ENCODE measurements at regions of chr11 and their contacts with region 1.

Region 1: GRCh38 chr11:66081505-66081904 is 11.4 kb downstream of the PACS1 start:
- DNase-seq: peak; percentile 92
- H3K4me3 Mint-ChIP-seq: peak overlapping the region; percentile 83
- H3K27ac Mint-ChIP-seq: peak overlapping the region; percentile 89
- H3K4me1 Mint-ChIP-seq: peaks cover 62% of the 10 kb centered on the region
- H3K27me3 Mint-ChIP-seq: no peaks in the 10 kb centered on the region

Region 2: DNA sequence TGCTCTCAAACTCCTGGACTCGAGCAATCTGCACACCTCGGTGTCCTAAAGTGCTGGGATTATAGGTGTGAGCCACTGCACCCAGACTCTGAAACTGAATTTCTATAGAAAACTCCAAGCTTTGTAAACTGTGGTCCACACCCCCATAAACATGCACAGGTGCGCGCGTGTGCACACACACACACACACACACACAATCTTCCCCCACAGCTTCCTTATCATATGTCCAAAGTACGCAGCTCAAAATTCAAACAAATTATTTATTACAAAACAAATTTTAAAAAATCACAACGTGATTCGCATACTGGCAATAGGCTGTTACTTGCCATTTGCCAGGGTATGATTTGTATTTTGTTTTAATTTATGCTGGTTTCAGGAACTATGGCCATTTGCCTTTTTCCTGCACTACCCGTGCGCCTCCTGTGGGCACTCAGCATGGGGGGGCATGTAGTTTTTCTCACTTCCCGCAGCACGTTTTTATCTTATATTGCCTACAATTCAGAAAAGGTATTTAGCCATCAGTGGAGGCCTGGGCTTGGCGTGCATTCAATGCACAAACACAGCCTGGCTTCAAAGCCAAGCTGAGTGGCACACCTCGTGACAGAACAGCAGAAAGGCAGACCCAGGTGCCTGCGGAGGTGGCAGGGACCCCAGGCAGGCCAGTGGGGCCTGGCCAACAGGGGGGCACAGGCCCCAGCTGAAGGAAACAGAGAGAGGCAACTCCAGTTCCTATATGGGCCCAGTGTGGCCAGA is 258.6 kb before region 1 on chr11:
- intact Hi-C with region 1: no loop called
- DNase-seq: no peak
- H3K4me3 Mint-ChIP-seq: no peak overlapping the region
- H3K27ac Mint-ChIP-seq: no peak overlapping the region
- H3K4me1 Mint-ChIP-seq: peaks cover 10% of the 10 kb centered on the region
- H3K27me3 Mint-ChIP-seq: no peaks in the 10 kb centered on the region

Region 3: GRCh38 chr11:66051766-66052663 is 29.5 kb before region 1 on chr11 and contains the start of gene SF3B2:
- intact Hi-C with region 1: no loop called
- DNase-seq: peak; percentile 99
- H3K4me3 Mint-ChIP-seq: peak within 1 kb of the TSS; percentile 88
- H3K27ac Mint-ChIP-seq: peak within 1 kb of the TSS; percentile 97
- H3K4me1 Mint-ChIP-seq: peaks cover 21% of the 10 kb centered on the region
- H3K27me3 Mint-ChIP-seq: peaks cover 6% of the 10 kb centered on the region
- total RNA-seq, gene SF3B2: 283 and 284 TPM in 2 replicates

Region 4: GRCh38 chr11:66112601-66113098 is 31.1 kb after region 1 on chr11:
- intact Hi-C with region 1: loop called (anchors 2 kb)
- DNase-seq: no peak
- H3K4me3 Mint-ChIP-seq: peak overlapping the region; percentile 32
- H3K27ac Mint-ChIP-seq: peak overlapping the region; percentile 79
- H3K4me1 Mint-ChIP-seq: peaks cover 71% of the 10 kb centered on the region
- H3K27me3 Mint-ChIP-seq: no peaks in the 10 kb centered on the region

Region 5: DNA sequence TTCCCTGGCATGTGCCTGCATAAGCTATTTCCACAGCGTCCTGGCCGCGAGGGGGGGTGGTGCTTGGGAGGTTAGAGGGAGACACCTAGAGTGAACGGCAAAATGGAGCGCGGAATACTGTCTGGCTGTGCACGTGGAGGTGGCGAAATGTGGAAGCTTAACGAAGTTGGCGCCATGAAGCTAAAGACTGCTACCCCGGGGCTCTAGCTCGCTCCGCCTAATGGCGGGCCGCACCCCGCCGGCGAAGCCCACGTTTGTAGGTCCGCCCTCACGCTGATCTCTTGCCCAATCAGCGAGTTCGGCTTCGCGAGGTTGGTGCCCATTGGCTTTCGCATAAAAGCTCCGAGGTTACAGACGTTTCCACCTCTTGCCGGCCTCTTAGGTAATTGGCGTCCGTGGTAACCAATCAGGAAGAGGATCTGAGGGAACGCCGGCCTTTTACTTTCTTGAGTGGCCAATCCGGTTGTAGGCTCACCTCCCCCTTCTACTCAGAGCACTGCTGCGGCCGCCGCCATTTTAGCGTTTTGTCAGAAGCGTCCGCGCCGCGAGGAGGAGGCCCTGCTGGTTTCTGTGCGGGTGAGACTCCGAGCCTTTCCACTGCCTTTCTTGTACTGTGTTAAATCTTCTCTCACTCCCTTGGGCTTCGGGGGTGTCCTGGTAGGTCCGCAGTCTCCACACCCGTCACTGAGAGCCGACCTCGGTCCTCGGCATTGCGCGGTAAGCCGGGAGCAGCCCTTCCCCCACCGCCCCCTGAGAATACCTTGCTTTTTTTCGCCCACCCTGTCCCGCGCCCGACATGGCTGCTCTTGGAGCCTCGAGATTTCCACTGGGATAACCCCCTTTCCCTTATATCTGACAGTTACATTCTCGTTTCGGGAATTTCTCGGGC is 556.9 kb after region 1 on chr11 and contains the start of gene RBM4:
- intact Hi-C with region 1: no loop called
- DNase-seq: peak; percentile 99
- H3K4me3 Mint-ChIP-seq: peak within 1 kb of the TSS; percentile 91
- H3K27ac Mint-ChIP-seq: peak within 1 kb of the TSS; percentile 98
- H3K4me1 Mint-ChIP-seq: peaks cover 53% of the 10 kb centered on the region
- H3K27me3 Mint-ChIP-seq: no peaks in the 10 kb centered on the region
- total RNA-seq, gene RBM4: 109 and 133 TPM in 2 replicates